ENCODE measurements at regions of chr15 and their contacts with region 1.

Region 1: GRCh38 chr15:60469893-60470641 is 8.9 kb downstream of the ICE2 start:
- DNase-seq: no peak
- ATAC-seq: no peak
- H3K4me3 ChIP-seq: no peak overlapping the region
- H3K27ac ChIP-seq: no peak overlapping the region
- H3K4me1 ChIP-seq: no peaks in the 10 kb centered on the region
- H3K27me3 ChIP-seq: no peaks in the 10 kb centered on the region
- CTCF ChIP-seq: no peak

Region 2: DNA sequence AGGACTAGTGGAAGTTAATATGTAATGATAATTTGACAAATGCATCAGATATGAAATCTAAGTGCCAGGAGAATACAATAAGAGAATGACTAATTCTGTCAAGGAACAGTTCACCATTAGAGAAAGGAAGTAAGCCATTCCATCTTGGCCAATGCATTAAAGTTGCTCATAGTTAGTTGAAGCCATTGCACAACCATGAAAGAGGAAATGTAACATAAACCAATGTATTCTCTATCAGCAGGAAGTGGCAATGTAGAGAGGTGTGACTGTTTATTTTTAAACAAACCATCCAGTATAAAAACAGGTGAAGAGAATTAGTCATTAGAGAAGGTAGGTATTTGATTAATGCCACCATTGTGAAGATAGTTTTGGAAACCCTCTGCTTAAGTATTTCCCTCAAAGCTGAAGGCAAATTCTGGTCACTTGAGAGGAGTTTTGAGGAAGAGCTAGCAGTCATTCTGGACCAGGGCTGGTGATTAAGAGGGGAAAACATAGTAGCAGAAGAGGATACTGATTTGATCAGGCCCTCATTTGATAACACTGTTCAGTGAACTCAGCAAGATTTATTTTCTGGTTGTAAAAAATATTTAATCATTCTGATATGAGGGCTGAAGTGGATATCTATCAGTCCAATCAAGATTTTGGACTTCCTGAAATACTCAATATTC is 61.5 kb before region 1 on chr15:
- CTCF ChIA-PET with region 1: no interaction called
- POLR2A ChIA-PET with region 1: interaction called, 13 read pairs
- in situ Hi-C with region 1: no loop called
- intact Hi-C with region 1: no loop called
- DNase-seq: no peak
- ATAC-seq: peak; percentile 59; the same call in 1 of the 2 replicates
- H3K4me3 ChIP-seq: no peak overlapping the region
- H3K27ac ChIP-seq: peak overlapping the region; percentile 55
- H3K4me1 ChIP-seq: peaks cover 19% of the 10 kb centered on the region
- H3K27me3 ChIP-seq: no peaks in the 10 kb centered on the region
- CTCF ChIP-seq: no peak

Region 3: GRCh38 chr15:60568944-60569391 is 98.9 kb after region 1 on chr15:
- CTCF ChIA-PET with region 1: no interaction called
- POLR2A ChIA-PET with region 1: interaction called, 22 read pairs
- in situ Hi-C with region 1: no loop called
- intact Hi-C with region 1: no loop called
- DNase-seq: no peak
- ATAC-seq: no peak
- H3K4me3 ChIP-seq: no peak overlapping the region
- H3K27ac ChIP-seq: no peak overlapping the region
- H3K4me1 ChIP-seq: no peaks in the 10 kb centered on the region
- H3K27me3 ChIP-seq: peaks cover 15% of the 10 kb centered on the region
- CTCF ChIP-seq: no peak

Measured in Panc1 (cell line).